B cell (primary cell): ENCODE measurements at regions of chr2 and their contacts with region 1.

Region 1: DNA sequence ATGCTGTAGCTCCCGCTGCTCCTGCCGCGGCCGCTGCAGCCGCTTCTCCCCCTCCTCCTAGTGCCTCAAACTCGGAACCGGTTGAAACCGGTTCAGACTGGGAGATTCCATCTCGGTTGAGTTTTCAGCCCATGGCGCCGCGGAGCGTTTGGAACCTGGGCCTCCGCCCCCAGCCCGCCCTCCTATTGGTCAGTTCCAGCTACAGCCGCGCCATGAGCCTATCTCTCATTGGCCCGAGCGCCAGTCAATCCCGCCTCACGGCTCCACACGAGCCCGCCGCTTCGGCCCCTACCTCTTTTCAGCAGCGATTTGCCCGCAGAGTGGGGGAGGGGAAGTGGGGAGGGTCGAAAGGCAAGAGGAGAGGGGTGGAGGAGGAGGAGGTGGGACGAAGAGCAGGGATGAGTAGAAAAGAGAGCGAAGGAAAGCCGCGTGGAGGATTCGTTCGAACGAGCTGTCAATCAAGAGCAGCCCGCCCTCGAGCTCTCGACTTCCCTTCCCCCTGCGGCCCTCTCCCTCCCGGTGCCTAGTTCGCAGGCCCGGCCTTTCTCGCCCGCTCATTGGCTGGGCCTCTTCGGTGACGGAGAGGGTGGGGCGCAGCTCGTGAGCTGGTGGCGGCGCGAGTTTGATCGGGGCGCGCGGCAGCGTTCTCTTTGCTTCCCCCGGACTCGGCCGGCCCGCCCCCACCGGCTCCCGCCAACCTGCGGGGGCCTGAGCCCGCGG is at the start of gene XPO1:
- DNase-seq: peak; percentile 100
- ATAC-seq: peak; percentile 77
- H3K4me3 ChIP-seq: peak within 1 kb of the TSS; percentile 69 to 88 (median 73)
- H3K4me3 Mint-ChIP-seq: peak within 1 kb of the TSS; percentile 99
- H3K27ac ChIP-seq: peak within 1 kb of the TSS; percentile 99 to 100
- H3K27ac Mint-ChIP-seq: peak within 1 kb of the TSS; percentile 100
- H3K4me1 ChIP-seq: peaks cover 22 to 26% of the 10 kb centered on the region in 2 donors
- H3K4me1 Mint-ChIP-seq: peaks cover 37% of the 10 kb centered on the region
- H3K27me3 ChIP-seq: no peaks in the 10 kb centered on the region
- H3K27me3 Mint-ChIP-seq: no peaks in the 10 kb centered on the region
- CTCF ChIP-seq: no peak
- total RNA-seq, gene XPO1: 208 and 219 TPM in 2 replicates

Region 2: DNA sequence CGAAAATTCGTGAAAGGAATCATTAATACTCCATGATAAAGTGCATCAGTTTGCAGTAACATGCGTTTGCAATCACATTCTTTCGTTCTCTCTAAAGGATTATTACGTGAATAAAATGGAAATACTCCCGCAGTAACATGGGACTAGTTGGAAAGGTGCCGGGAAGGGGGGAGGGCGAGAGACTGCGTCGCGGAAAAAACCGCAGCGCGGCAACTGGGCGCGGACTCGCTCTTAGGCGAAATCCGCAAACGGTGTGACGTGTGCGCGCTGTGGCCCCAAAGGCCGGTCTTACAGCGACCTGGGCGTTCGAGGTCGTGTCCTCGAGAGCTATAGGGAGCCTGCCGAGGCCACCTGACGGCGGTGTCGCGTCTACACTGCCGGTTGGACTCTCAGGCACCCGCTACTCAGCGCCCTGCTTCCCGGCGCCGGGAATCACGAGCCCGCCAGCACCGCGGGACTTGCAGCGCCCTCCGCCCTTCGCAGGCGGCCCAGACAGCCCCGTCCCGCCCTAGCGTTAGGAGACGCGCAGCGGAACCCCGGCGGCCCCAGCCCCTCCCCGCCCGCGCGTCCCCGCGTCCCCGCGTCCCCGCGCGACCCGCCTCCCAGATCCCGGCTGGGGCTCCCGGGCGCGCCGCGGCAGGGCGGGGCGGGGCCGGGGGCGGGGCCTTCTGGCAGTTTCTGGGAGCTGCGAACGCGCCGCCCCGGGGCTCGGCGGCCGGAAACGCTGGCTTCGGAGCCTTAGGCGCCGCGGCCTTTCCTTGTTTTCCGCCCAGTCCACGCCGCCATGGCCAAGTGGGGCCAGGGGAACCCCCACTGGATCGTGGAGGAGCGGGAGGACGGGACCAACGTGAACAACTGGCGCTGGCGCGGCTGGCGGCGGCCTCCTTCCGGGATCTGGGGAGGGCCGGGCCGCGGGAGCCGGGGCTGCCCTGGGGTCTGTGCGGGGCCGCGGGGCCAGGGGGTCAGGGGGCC is 361.3 kb before region 1 on chr2:
- CTCF ChIA-PET with region 1: no interaction called
- POLR2A ChIA-PET with region 1: interaction called, 4 read pairs
- intact Hi-C with region 1: loop called (anchors 2 kb)
- DNase-seq: peak; percentile 94
- ATAC-seq: peak; percentile 89
- H3K4me3 ChIP-seq: peak overlapping the region; percentile 69 to 97 (median 90)
- H3K4me3 Mint-ChIP-seq: peak overlapping the region; percentile 97
- H3K27ac ChIP-seq: peak overlapping the region; percentile 91 to 96
- H3K27ac Mint-ChIP-seq: peak overlapping the region; percentile 90
- H3K4me1 ChIP-seq: peaks cover 26 to 42% of the 10 kb centered on the region in 2 donors
- H3K4me1 Mint-ChIP-seq: peaks cover 48% of the 10 kb centered on the region
- H3K27me3 ChIP-seq: no peaks in the 10 kb centered on the region
- H3K27me3 Mint-ChIP-seq: no peaks in the 10 kb centered on the region
- CTCF ChIP-seq: no peak

Region 3: GRCh38 chr2:61504949-61505348 is 33.4 kb before region 1 on chr2:
- CTCF ChIA-PET with region 1: interaction called, 3 read pairs
- POLR2A ChIA-PET with region 1: no interaction called
- intact Hi-C with region 1: loop called (anchors 5 kb)
- DNase-seq: no peak
- ATAC-seq: no peak
- H3K4me3 ChIP-seq: no peak overlapping the region
- H3K4me3 Mint-ChIP-seq: no peak overlapping the region
- H3K27ac ChIP-seq: no peak overlapping the region
- H3K27ac Mint-ChIP-seq: no peak overlapping the region
- H3K4me1 ChIP-seq: no peaks in the 10 kb centered on the region
- H3K4me1 Mint-ChIP-seq: peaks cover 5% of the 10 kb centered on the region
- H3K27me3 ChIP-seq: no peaks in the 10 kb centered on the region
- H3K27me3 Mint-ChIP-seq: no peaks in the 10 kb centered on the region
- CTCF ChIP-seq: no peak

Region 4: GRCh38 chr2:61726456-61727209 is 188.3 kb after region 1 on chr2:
- CTCF ChIA-PET with region 1: no interaction called
- POLR2A ChIA-PET with region 1: no interaction called
- intact Hi-C with region 1: no loop called
- DNase-seq: no peak
- ATAC-seq: no peak
- H3K4me3 ChIP-seq: no peak overlapping the region
- H3K4me3 Mint-ChIP-seq: no peak overlapping the region
- H3K27ac ChIP-seq: no peak overlapping the region
- H3K27ac Mint-ChIP-seq: no peak overlapping the region
- H3K4me1 ChIP-seq: no peaks in the 10 kb centered on the region
- H3K4me1 Mint-ChIP-seq: no peaks in the 10 kb centered on the region
- H3K27me3 ChIP-seq: peaks cover 0 to 3% (median 0%) of the 10 kb centered on the region in 4 experiments
- H3K27me3 Mint-ChIP-seq: peaks cover 14% of the 10 kb centered on the region
- CTCF ChIP-seq: no peak

Region 5: GRCh38 chr2:61775956-61776570 is 237.7 kb after region 1 on chr2:
- CTCF ChIA-PET with region 1: interaction called, 3 read pairs
- POLR2A ChIA-PET with region 1: no interaction called
- intact Hi-C with region 1: loop called (anchors 5 kb)
- DNase-seq: peak; percentile 71
- ATAC-seq: peak; percentile 81
- H3K4me3 ChIP-seq: peak overlapping the region in 2 of 5 experiments; percentile 21 to 43
- H3K4me3 Mint-ChIP-seq: peak overlapping the region; percentile 61
- H3K27ac ChIP-seq: peak overlapping the region; percentile 65 to 71
- H3K27ac Mint-ChIP-seq: peak overlapping the region; percentile 90
- H3K4me1 ChIP-seq: peaks cover 18 to 21% of the 10 kb centered on the region in 2 donors
- H3K4me1 Mint-ChIP-seq: peaks cover 21% of the 10 kb centered on the region
- H3K27me3 ChIP-seq: no peaks in the 10 kb centered on the region
- H3K27me3 Mint-ChIP-seq: peaks cover 13% of the 10 kb centered on the region
- CTCF ChIP-seq: no peak

Region 6: GRCh38 chr2:61905372-61906185 is 367.2 kb after region 1 on chr2 and contains the start of gene COMMD1:
- CTCF ChIA-PET with region 1: no interaction called
- POLR2A ChIA-PET with region 1: no interaction called
- intact Hi-C with region 1: loop called (anchors 5 kb)
- DNase-seq: peak; percentile 87
- ATAC-seq: peak; percentile 99
- H3K4me3 ChIP-seq: peak within 1 kb of the TSS; percentile 61 to 97 (median 87)
- H3K4me3 Mint-ChIP-seq: peak within 1 kb of the TSS; percentile 91
- H3K27ac ChIP-seq: peak within 1 kb of the TSS; percentile 57 to 86
- H3K27ac Mint-ChIP-seq: peak within 1 kb of the TSS; percentile 90
- H3K4me1 ChIP-seq: peaks cover 7 to 8% of the 10 kb centered on the region in 2 donors
- H3K4me1 Mint-ChIP-seq: peaks cover 11% of the 10 kb centered on the region
- H3K27me3 ChIP-seq: no peaks in the 10 kb centered on the region
- H3K27me3 Mint-ChIP-seq: no peaks in the 10 kb centered on the region
- CTCF ChIP-seq: no peak
- total RNA-seq, gene COMMD1: 25.1 and 26.7 TPM in 2 replicates